ENCODE measurements at regions of chr7 and their contacts with region 1.

Region 1: DNA sequence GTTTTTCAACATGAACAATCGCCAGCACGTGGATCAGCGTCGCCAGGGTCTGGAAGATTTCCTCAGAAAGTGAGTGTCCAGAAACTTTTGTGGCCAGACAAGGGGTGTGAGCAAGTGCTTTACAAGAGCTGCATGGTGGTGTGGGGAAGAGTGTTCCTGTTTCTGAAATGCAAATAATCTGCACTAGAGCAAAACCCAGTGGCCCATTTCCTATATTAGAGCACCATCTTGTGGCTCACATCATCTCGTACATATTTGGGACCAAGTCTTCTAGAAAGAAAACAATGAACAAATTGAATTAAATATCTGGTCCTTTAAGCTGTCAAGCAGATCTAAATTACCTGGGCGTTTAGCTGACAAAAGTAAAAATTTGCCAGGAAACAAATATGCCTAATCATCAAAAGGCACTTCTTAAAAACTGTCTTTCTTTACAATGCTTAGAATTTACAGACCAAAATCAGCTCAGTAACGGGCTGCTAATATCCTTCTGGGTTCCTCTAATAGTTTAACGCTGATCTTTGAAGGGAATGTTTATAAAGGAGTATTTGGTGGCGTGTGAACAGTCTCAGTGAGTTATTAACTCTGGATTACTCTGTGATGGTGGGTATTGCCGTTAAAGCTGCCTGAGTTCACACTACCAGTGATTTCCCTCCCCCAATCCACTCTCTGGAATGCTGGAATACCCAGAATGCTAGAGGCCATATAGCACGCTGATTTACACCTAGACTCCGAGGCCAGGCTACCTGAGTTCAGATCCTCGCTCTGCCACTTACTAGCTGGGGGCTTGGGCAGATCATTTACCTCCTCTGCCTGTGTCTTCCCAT is 73.6 kb downstream of the SNX10 start:
- DNase-seq: peak in 34 of 35 experiments; percentile 11 to 83 (median 45)
- ATAC-seq: peak; percentile 69 to 81 (median 74)
- H3K4me3 ChIP-seq: no peak overlapping the region
- H3K4me3 Mint-ChIP-seq: no peak overlapping the region
- H3K27ac ChIP-seq: no peak overlapping the region
- H3K27ac Mint-ChIP-seq: peak overlapping the region in 1 of 2 donors; percentile 7
- H3K4me1 ChIP-seq: peaks cover 0 to 8% of the 10 kb centered on the region in 2 experiments
- H3K4me1 Mint-ChIP-seq: peaks cover 6 to 11% (median 10%) of the 10 kb centered on the region in 3 donors
- H3K27me3 ChIP-seq: no peaks in the 10 kb centered on the region
- H3K27me3 Mint-ChIP-seq: peaks cover 0 to 3% of the 10 kb centered on the region in 2 donors

Region 2: DNA sequence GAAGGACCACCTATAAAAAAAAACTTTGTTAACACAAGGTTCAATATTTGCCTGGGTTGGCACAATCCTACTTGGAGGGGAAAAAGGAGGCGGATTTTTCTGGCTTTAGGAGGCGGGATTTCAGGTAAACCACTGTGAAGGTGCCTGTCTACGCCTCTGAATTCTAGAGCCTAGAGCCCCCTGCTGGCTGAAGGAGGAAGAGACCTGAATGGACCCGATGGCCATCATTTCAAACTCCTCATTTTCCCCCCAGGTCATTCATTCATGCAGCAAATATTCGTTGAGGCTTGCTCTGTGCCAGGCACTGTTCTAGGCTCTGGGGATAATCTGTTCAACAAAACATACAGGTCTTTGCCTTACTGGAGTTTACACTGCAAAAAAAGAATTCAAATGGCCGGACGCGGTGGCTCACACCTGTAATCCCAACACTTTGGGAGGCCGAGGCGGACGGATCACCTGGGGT is 303.6 kb before region 1 on chr7:
- CTCF ChIA-PET with region 1: interaction called, 4 to 10 read pairs
- POLR2A ChIA-PET with region 1: no interaction called
- DNase-seq: peak; percentile 10 to 80 (median 57)
- ATAC-seq: peak; percentile 75 to 84 (median 80)
- H3K4me3 ChIP-seq: no peak overlapping the region
- H3K4me3 Mint-ChIP-seq: no peak overlapping the region
- H3K27ac ChIP-seq: no peak overlapping the region
- H3K27ac Mint-ChIP-seq: no peak overlapping the region
- H3K4me1 ChIP-seq: no peaks in the 10 kb centered on the region
- H3K4me1 Mint-ChIP-seq: peaks cover 2 to 8% (median 4%) of the 10 kb centered on the region in 3 donors
- H3K27me3 ChIP-seq: peaks cover 0 to 18% of the 10 kb centered on the region in 2 experiments
- H3K27me3 Mint-ChIP-seq: peaks cover 28 to 35% of the 10 kb centered on the region in 2 donors

Region 3: GRCh38 chr7:26090927-26091519 is 274.3 kb before region 1 on chr7:
- CTCF ChIA-PET with region 1: interaction called, 34 to 46 read pairs
- POLR2A ChIA-PET with region 1: no interaction called
- DNase-seq: peak in 2 of 35 experiments; percentile 9 to 69
- ATAC-seq: peak; percentile 57 to 75 (median 68)
- H3K4me3 ChIP-seq: no peak overlapping the region
- H3K4me3 Mint-ChIP-seq: peak overlapping the region in 1 of 3 donors; percentile 6
- H3K27ac ChIP-seq: no peak overlapping the region
- H3K27ac Mint-ChIP-seq: peak overlapping the region in 1 of 2 donors; percentile 62
- H3K4me1 ChIP-seq: no peaks in the 10 kb centered on the region
- H3K4me1 Mint-ChIP-seq: peaks cover 16 to 26% (median 24%) of the 10 kb centered on the region in 3 donors
- H3K27me3 ChIP-seq: no peaks in the 10 kb centered on the region
- H3K27me3 Mint-ChIP-seq: no peaks in the 10 kb centered on the region

Region 4: GRCh38 chr7:26375726-26376174 is 10.5 kb after region 1 on chr7:
- CTCF ChIA-PET with region 1: interaction called, 10 to 12 read pairs
- POLR2A ChIA-PET with region 1: no interaction called
- DNase-seq: peak in 4 of 35 experiments; percentile 1 to 37 (median 4)
- ATAC-seq: peak in 3 of 4 experiments; percentile 10 to 22 (median 13)
- H3K4me3 ChIP-seq: peak overlapping the region in 1 of 2 donors; percentile 74
- H3K4me3 Mint-ChIP-seq: peak overlapping the region; percentile 58 to 78 (median 67)
- H3K27ac ChIP-seq: no peak overlapping the region
- H3K27ac Mint-ChIP-seq: no peak overlapping the region
- H3K4me1 ChIP-seq: peaks cover 0 to 14% of the 10 kb centered on the region in 2 experiments
- H3K4me1 Mint-ChIP-seq: peaks cover 2 to 6% (median 6%) of the 10 kb centered on the region in 3 donors
- H3K27me3 ChIP-seq: peaks cover 0 to 16% of the 10 kb centered on the region in 2 experiments
- H3K27me3 Mint-ChIP-seq: peaks cover 25 to 39% of the 10 kb centered on the region in 2 donors

Region 5: GRCh38 chr7:27160546-27161213 is 795.4 kb after region 1 on chr7:
- CTCF ChIA-PET with region 1: interaction called, 10 to 33 read pairs
- POLR2A ChIA-PET with region 1: no interaction called
- DNase-seq: peak; percentile 50 to 92 (median 79)
- ATAC-seq: peak; percentile 70 to 85 (median 74)
- H3K4me3 ChIP-seq: peak overlapping the region; percentile 57 to 81
- H3K4me3 Mint-ChIP-seq: peak overlapping the region; percentile 43 to 73 (median 63)
- H3K27ac ChIP-seq: no peak overlapping the region
- H3K27ac Mint-ChIP-seq: no peak overlapping the region
- H3K4me1 ChIP-seq: peaks cover 2 to 61% of the 10 kb centered on the region in 2 experiments
- H3K4me1 Mint-ChIP-seq: peaks cover 35 to 41% (median 40%) of the 10 kb centered on the region in 3 donors
- H3K27me3 ChIP-seq: peaks cover 2 to 90% of the 10 kb centered on the region in 2 experiments
- H3K27me3 Mint-ChIP-seq: peaks cover 49 to 82% of the 10 kb centered on the region in 2 donors

Measured in T-cell (primary cell).